SK-N-SH (cell line): ENCODE measurements at regions of chr4 and their contacts with region 1.

Region 1: GRCh38 chr4:123776254-123776653 is 379.7 kb downstream of the SPRY1 start:
- DNase-seq: no peak
- H3K4me3 ChIP-seq: no peak overlapping the region
- H3K27ac ChIP-seq: no peak overlapping the region
- H3K4me1 ChIP-seq: no peaks in the 10 kb centered on the region
- H3K27me3 ChIP-seq: no peaks in the 10 kb centered on the region
- CTCF ChIP-seq: no peak
- EP300 ChIP-seq: no peak
- RAD21 ChIP-seq: no peak

Region 2: DNA sequence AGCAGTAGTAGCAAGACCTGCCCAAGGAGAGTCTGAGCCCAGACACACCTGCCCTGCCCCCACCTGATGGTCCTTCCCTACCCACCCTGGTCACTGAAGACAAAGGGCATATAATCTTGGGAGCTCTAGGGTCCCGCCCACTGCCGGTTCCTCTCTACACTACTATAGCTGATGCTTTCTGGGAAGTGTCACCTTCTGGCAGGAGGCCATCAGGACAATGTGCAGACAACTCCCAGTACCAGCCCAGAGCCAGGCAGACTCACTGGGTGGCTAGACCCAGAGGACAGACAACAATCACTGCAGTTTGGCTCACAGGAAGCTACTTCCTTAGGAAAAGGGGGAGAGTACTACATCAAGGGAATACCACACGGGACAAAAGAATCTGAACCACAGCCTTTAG is 66.9 kb before region 1 on chr4:
- CTCF ChIA-PET with region 1: no interaction called
- POLR2A ChIA-PET with region 1: no interaction called
- DNase-seq: no peak
- H3K4me3 ChIP-seq: no peak overlapping the region
- H3K27ac ChIP-seq: no peak overlapping the region
- H3K4me1 ChIP-seq: no peaks in the 10 kb centered on the region
- H3K27me3 ChIP-seq: no peaks in the 10 kb centered on the region
- CTCF ChIP-seq: no peak
- EP300 ChIP-seq: no peak
- RAD21 ChIP-seq: no peak

Region 3: DNA sequence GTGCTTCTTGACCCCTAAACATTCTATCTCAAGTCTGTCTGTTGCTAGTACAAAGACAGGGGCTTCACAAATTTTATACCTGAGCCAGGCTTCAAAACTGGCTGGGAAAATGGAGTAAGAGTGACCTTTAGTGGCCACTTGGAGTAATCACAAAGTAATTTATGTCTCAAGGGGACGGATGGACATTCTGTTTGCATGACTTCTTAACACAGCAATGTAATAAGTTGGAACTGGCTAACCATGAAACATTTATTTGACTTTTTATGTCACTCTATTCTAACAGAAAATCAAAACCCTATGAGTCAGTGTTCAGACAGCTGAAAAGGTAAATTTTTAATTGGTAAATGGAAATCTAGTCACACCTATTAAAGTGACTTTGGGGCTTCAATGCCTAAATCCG is 335.7 kb after region 1 on chr4:
- CTCF ChIA-PET with region 1: interaction called, 12 read pairs
- POLR2A ChIA-PET with region 1: no interaction called
- DNase-seq: peak; percentile 53
- H3K4me3 ChIP-seq: no peak overlapping the region; a peak in 1 of 4 replicates
- H3K27ac ChIP-seq: peak overlapping the region; percentile 18 to 60; a peak in 3 of 4 replicates
- H3K4me1 ChIP-seq: peaks cover 0 to 8% of the 10 kb centered on the region in 2 experiments; a peak in 2 of 4 replicates
- H3K27me3 ChIP-seq: no peaks in the 10 kb centered on the region
- CTCF ChIP-seq: peak; percentile 85
- EP300 ChIP-seq: no peak
- RAD21 ChIP-seq: peak; percentile 99